Activated naive CD4-positive, alpha-beta T cell treated with anti-CD3 and anti-CD28 coated beads, Interleukin-2, amount 10 ng/mL, durations not matched to agents 7 days and 5 days (primary cell): ENCODE measurements at regions of chr16 and their contacts with region 1.

Region 1: DNA sequence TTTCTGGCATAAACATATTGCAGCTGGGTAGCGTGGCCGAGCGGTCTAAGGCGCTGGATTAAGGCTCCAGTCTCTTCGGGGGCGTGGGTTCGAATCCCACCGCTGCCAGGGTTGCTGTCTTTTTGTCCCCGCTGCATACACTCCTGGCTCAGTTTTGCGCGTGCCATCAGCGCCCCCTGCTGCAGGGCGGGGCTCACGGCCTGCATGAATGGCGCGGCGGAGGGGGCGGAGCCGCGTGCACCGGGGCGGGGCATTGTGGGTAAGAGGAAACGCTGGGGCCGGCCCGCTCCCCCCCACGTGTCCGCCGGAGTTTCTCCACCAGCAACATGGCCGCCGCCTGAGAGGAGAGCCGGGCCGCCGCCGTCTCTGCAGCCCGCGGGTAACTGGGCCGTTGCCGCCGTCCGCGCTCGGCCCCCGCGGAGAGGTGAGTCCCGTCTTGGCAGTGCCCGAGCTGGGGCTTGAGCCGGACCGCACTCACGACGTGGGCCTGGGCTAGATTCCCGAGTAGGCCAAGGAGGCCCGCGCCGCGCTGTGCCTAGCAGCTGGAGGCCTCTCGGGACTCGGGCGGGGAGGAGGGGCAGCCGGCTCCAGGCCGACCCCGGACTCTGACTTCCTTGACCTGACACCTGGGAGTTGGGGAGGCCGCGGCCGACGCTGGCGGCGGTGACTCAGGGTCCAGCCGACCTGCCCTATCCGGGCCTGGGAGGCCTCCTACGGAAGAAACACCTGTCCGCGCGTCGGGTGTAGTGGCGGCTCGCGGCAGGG is at the start of gene POLR3E:
- DNase-seq: peak; percentile 100
- H3K4me3 Mint-ChIP-seq: peak within 1 kb of the TSS; percentile 88
- H3K27ac Mint-ChIP-seq: peak within 1 kb of the TSS; percentile 99
- H3K4me1 Mint-ChIP-seq: peaks cover 37% of the 10 kb centered on the region
- H3K27me3 Mint-ChIP-seq: peaks cover 11% of the 10 kb centered on the region

Region 2: GRCh38 chr16:22206013-22206841 is 91.1 kb before region 1 on chr16 and contains the start of gene EEF2K:
- CTCF ChIA-PET with region 1: interaction called, 64 read pairs
- DNase-seq: peak; percentile 89
- H3K4me3 Mint-ChIP-seq: peak within 1 kb of the TSS; percentile 95
- H3K27ac Mint-ChIP-seq: peak within 1 kb of the TSS; percentile 76
- H3K4me1 Mint-ChIP-seq: peaks cover 53% of the 10 kb centered on the region
- H3K27me3 Mint-ChIP-seq: no peaks in the 10 kb centered on the region

Region 3: GRCh38 chr16:22308824-22309520 is 11.7 kb after region 1 on chr16:
- CTCF ChIA-PET with region 1: interaction called, 16 read pairs
- DNase-seq: no peak
- H3K4me3 Mint-ChIP-seq: no peak overlapping the region
- H3K27ac Mint-ChIP-seq: no peak overlapping the region
- H3K4me1 Mint-ChIP-seq: no peaks in the 10 kb centered on the region
- H3K27me3 Mint-ChIP-seq: no peaks in the 10 kb centered on the region